ENCODE measurements at regions of chr2 and their contacts with region 1.

Region 1: DNA sequence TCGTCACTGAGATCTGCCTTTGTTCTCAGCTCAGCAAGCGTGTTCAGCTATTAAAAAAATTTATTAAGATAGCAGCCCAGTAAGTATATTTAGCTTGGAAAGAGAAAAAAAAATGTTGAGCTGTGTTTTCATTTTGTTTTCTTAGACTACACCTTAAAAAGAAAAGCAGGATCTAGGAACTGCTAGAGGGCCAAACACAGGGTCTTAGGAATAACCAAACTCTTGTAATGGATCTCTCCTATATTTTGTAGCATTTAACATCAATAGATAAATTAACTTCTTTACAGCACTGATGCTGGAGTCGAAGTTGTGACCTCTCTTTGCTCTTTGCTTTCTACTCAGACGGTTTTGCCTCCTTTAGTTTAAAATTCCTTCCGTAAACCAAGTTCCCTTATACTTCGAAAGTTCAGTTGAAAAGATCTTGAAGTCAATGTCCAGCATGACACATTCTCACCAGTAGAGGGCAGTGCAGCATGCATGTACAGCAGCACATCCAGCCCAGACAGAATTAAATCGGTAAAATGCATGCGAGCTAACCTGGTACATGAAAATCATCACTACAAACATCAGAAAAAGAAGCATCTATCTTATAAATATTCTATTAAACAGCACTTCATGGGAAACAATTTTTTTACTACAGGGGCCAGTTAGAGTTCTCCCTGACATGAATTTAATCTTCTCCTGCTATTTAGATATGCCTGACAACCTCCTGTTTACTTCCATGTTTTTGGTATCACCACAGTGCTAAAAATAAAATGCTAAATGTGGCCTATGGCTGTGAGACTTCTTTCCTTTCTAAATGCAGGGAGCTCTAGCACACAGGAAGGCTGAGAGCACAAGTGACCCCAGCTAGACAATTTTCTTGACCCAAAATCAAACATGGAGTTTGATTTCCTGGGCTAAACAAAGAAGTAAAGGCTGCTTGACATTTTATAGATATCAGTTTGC is 48.2 kb upstream of the MAP3K20 start:
- DNase-seq: peak; percentile 46 to 92
- ATAC-seq: peak; percentile 84 to 90
- H3K4me3 ChIP-seq: no peak overlapping the region
- H3K27ac ChIP-seq: peak overlapping the region; percentile 48 to 72
- H3K4me1 ChIP-seq: peaks cover 6% of the 10 kb centered on the region; the same call in 2 of the 3 replicates
- CTCF ChIP-seq: peak; percentile 97
- EP300 ChIP-seq: no peak
- POLR2A ChIP-seq: no peak
- RAD21 ChIP-seq: peak; percentile 99

Region 2: GRCh38 chr2:172806493-172806892 is 221.0 kb before region 1 on chr2:
- CTCF ChIA-PET with region 1: interaction called, 31 read pairs
- POLR2A ChIA-PET with region 1: no interaction called
- DNase-seq: peak; percentile 18 to 68
- ATAC-seq: peak; percentile 73 to 74; a peak in 5 of 6 replicates
- H3K4me3 ChIP-seq: no peak overlapping the region
- H3K27ac ChIP-seq: no peak overlapping the region
- H3K4me1 ChIP-seq: no peaks in the 10 kb centered on the region
- CTCF ChIP-seq: peak; percentile 93
- EP300 ChIP-seq: no peak
- POLR2A ChIP-seq: no peak
- RAD21 ChIP-seq: peak; percentile 91 to 95

Region 3: GRCh38 chr2:172905937-172906811 is 121.3 kb before region 1 on chr2:
- CTCF ChIA-PET with region 1: no interaction called
- POLR2A ChIA-PET with region 1: no interaction called
- DNase-seq: no peak
- ATAC-seq: no peak
- H3K4me3 ChIP-seq: no peak overlapping the region
- H3K27ac ChIP-seq: no peak overlapping the region
- H3K4me1 ChIP-seq: no peaks in the 10 kb centered on the region
- CTCF ChIP-seq: no peak
- EP300 ChIP-seq: no peak
- POLR2A ChIP-seq: no peak
- RAD21 ChIP-seq: no peak

Region 4: GRCh38 chr2:173037245-173038120 is 10.0 kb after region 1 on chr2:
- CTCF ChIA-PET with region 1: interaction called, 28 read pairs
- POLR2A ChIA-PET with region 1: no interaction called
- DNase-seq: no peak
- ATAC-seq: no peak; a peak in 1 of 6 replicates
- H3K4me3 ChIP-seq: no peak overlapping the region
- H3K27ac ChIP-seq: peak overlapping the region; percentile 21; a peak in 1 of 6 replicates
- H3K4me1 ChIP-seq: peaks cover 6% of the 10 kb centered on the region; the same call in 1 of the 3 replicates
- CTCF ChIP-seq: no peak
- EP300 ChIP-seq: no peak
- POLR2A ChIP-seq: no peak
- RAD21 ChIP-seq: no peak

Region 5: DNA sequence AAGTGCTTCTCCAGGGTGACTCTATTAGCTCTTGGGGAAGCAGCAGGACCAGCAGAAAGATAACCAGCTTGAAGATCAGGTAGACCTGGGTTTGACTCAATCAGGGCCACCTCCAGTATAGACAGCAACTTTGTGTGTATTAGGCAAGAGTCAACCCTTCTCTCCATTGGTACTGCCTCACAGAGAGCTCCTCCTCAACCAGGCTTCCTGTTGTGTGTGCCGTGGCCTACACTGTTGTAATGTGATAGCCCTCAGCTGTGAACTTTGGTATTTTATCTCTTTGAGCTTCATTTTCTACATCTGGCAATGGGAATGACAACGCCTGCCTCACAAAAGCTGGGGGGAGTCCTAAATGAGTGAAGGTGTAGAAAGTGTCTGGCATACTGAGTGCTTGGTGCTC is 31.2 kb after region 1 on chr2:
- CTCF ChIA-PET with region 1: interaction called, 11 read pairs
- POLR2A ChIA-PET with region 1: no interaction called
- DNase-seq: no peak
- ATAC-seq: no peak
- H3K4me3 ChIP-seq: no peak overlapping the region
- H3K27ac ChIP-seq: peak overlapping the region; percentile 7 to 48; a peak in 3 of 6 replicates
- H3K4me1 ChIP-seq: peaks cover 22% of the 10 kb centered on the region
- CTCF ChIP-seq: no peak
- EP300 ChIP-seq: no peak
- POLR2A ChIP-seq: no peak
- RAD21 ChIP-seq: no peak

Region 6: DNA sequence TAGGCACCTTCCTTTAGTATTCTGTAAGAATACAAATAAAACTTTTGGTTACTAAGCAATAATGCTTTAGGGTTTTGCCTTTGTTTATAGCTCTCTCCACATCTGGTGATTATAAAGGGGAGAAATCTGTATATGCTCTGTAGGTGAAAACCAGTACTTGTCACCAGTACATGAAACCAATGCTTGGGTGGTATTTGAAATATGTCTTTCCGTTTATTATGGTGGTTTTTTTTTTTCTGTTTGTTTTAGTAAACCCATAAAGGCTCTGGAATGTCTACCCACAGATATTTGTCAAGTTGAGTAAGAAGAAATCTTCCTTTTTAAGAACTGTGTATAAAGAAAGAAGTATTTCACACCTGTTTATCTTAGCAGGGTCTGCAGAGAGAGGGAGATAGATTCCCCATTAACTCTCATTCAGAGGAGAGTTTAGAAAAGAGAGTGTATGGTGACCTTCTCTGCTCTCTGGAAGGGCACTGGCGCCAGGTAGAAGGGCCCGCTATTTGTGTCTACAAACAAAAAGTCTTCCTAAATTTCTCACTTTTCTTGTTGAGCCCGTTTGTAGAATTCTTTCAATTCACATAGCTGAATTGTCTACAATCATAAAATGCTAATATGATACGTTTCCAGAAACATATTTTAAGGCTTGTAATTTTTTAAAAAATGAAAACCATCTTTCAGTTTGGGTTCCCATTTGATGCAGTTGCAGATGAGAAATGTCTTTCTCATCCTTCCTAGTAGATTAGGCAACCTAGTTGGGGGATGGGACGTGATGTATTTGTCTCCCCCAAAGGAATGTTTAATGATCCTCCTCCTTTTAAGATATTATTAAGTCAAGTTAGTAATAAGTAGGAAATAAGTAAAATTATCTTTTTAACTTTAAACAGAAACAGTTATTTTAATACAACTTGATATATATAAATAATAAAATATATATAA is 82.1 kb after region 1 on chr2:
- CTCF ChIA-PET with region 1: interaction called, 11 read pairs
- POLR2A ChIA-PET with region 1: no interaction called
- DNase-seq: peak in 1 of 2 experiments; percentile 77
- ATAC-seq: peak; percentile 82 to 89
- H3K4me3 ChIP-seq: peak overlapping the region; percentile 30; the same call in 2 of the 3 replicates
- H3K27ac ChIP-seq: peak overlapping the region; percentile 83 to 86
- H3K4me1 ChIP-seq: peaks cover 44% of the 10 kb centered on the region
- CTCF ChIP-seq: no peak
- EP300 ChIP-seq: peak; percentile 40 to 59; a peak in 4 of 5 replicates
- POLR2A ChIP-seq: no peak
- RAD21 ChIP-seq: peak in 1 of 2 experiments; percentile 29; a peak in 1 of 5 replicates

Region 7: GRCh38 chr2:173204316-173204715 is 176.9 kb after region 1 on chr2:
- CTCF ChIA-PET with region 1: interaction called, 395 read pairs
- POLR2A ChIA-PET with region 1: no interaction called
- DNase-seq: no peak
- ATAC-seq: no peak
- H3K4me3 ChIP-seq: no peak overlapping the region
- H3K27ac ChIP-seq: no peak overlapping the region
- H3K4me1 ChIP-seq: peaks cover 11% of the 10 kb centered on the region; the same call in 2 of the 3 replicates
- CTCF ChIP-seq: no peak
- EP300 ChIP-seq: no peak
- POLR2A ChIP-seq: no peak
- RAD21 ChIP-seq: no peak

Region 8: GRCh38 chr2:173448938-173449471 is 421.6 kb after region 1 on chr2:
- CTCF ChIA-PET with region 1: interaction called, 14 read pairs
- POLR2A ChIA-PET with region 1: no interaction called
- DNase-seq: peak; percentile 73 to 90
- ATAC-seq: peak; percentile 97 to 99
- H3K4me3 ChIP-seq: peak overlapping the region; percentile 38
- H3K27ac ChIP-seq: peak overlapping the region; percentile 80 to 90
- H3K4me1 ChIP-seq: no peaks in the 10 kb centered on the region
- CTCF ChIP-seq: peak; percentile 78
- EP300 ChIP-seq: no peak
- POLR2A ChIP-seq: peak; percentile 55; the same call in 1 of the 2 replicates
- RAD21 ChIP-seq: peak; percentile 82 to 87

Measured in A549 (cell line).